Uterus (tissue), 4 donors: ENCODE measurements at regions of chr5 and their contacts with region 1.

Region 1: DNA sequence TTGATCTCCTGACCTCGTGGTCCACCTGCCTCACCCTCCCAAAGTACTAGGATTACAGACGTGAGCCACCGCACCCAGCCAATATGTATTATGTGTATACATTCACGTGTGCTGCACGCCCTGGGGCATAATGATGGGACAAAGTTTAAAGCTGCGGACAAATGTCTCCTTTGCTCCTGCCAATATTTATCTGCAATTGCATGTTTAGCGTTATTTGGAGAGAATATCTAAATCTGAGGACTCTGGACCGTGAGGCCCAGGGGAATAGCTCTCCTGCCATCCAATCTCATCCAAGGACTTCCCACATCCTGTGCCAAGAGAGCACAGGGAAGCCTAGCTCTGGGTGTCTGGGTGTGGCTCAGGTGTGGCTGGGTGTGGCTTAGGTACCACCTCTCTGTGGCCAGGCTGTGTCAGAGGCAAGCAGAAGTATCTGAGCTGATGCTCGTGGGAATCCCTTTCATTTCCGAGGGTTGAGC is 6.9 kb upstream of the BOD1 start:
- DNase-seq: no peak
- H3K4me3 ChIP-seq: no peak overlapping the region
- H3K27ac ChIP-seq: no peak overlapping the region
- H3K4me1 ChIP-seq: no peaks in the 10 kb centered on the region
- H3K27me3 ChIP-seq: no peaks in the 10 kb centered on the region
- CTCF ChIP-seq: no peak
- POLR2A ChIP-seq: no peak

Region 2: GRCh38 chr5:172586125-172587060 is 1036.9 kb before region 1 on chr5:
- intact Hi-C with region 1: no loop called
- DNase-seq: no peak
- H3K4me3 ChIP-seq: no peak overlapping the region
- H3K27ac ChIP-seq: peak overlapping the region; percentile 54 to 85
- H3K4me1 ChIP-seq: peaks cover 4 to 18% of the 10 kb centered on the region in 2 donors
- H3K27me3 ChIP-seq: no peaks in the 10 kb centered on the region
- CTCF ChIP-seq: no peak
- POLR2A ChIP-seq: no peak

Region 3: GRCh38 chr5:173736923-173737412 is 113.6 kb after region 1 on chr5:
- intact Hi-C with region 1: no loop called
- DNase-seq: no peak
- H3K4me3 ChIP-seq: no peak overlapping the region
- H3K27ac ChIP-seq: no peak overlapping the region
- H3K4me1 ChIP-seq: no peaks in the 10 kb centered on the region
- H3K27me3 ChIP-seq: no peaks in the 10 kb centered on the region
- CTCF ChIP-seq: no peak
- POLR2A ChIP-seq: no peak

Region 4: DNA sequence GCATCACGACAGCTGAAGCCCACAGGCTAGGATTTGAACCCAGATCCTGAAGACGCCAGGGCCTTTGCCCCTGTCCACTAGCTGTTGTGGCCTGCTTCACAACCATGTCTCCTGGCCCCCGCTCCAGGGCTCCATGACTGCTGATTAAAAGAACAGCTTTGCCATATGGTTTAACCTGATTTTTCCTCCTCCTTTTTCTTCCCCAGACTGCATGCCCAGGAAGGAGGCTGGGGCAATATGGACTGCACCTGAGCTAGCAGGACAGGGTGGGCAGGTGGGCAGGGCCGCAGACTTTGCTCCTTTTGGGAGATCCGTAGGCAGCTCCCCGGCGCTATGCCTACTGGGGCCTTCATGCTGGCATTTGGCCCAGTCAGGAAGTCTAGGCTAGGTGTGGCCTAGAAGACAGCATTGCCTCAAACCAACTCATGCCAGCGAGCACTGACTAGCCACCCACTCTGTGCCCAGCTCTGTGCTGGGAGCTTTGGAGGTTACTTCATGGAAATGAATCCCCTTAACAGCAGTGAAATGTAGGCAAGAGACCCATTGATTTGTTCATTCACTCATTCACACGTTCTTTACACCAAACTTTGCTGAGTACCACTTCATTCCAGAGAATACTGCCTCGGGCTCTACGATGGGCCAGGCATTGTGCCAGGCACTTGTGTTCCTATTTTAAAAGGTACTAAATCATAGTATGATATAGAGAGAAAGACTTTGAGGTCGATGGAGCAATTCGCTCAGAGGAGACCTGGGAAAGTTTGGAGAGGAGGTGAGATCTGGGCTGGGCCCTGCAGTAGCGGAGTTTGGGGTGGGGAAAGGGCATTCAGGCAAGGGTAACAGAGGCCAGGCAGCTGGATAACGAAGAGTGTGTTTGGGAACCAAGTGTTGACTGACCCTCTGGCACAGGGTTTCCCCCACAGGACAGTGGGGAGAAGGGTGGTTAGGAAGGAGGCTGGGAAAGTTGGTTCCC is 170.7 kb after region 1 on chr5:
- intact Hi-C with region 1: no loop called
- DNase-seq: no peak
- H3K4me3 ChIP-seq: no peak overlapping the region
- H3K27ac ChIP-seq: no peak overlapping the region
- H3K4me1 ChIP-seq: no peaks in the 10 kb centered on the region
- H3K27me3 ChIP-seq: no peaks in the 10 kb centered on the region
- CTCF ChIP-seq: no peak
- POLR2A ChIP-seq: no peak

Region 5: DNA sequence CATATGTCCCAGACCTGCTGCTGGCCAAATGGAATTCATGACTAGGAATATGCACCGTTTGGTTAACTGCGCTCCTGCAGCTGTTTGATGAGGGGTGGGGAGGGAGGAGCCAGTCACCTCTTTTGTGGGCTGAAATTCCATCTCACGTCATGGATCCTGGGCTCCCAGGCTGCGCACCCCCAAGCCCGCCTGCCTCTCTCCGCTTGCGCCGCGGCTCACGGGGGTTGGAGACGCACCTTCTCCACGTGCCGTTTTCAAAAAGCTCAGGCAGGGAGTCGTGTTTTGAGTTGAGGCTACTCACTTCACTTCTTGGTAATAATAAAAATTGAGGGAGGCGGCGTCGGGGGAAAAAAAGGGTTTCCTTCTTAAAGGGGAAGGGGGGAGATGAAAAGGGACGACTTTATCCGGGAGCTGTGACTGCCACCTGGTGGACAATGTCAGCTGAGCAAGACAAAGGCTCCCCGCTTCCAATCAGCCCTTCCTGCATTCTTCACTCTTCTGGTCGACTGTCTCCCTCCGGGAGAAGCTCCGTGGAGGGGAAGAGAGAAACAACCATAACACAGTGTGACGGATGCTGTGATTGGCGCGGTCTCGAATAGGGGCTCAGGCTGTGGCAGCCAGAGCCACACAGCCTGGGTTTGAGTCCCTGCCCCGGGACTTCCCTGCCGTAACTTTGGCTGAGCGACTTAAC is 349.7 kb after region 1 on chr5:
- intact Hi-C with region 1: loop called (anchors 5 kb)
- DNase-seq: peak; percentile 86
- H3K4me3 ChIP-seq: peak overlapping the region; percentile 35 to 39
- H3K27ac ChIP-seq: peak overlapping the region; percentile 39 to 61
- H3K4me1 ChIP-seq: no peaks in the 10 kb centered on the region
- H3K27me3 ChIP-seq: no peaks in the 10 kb centered on the region
- CTCF ChIP-seq: peak; percentile 86 to 91 (median 88)
- POLR2A ChIP-seq: no peak

Region 6: GRCh38 chr5:174097518-174098185 is 474.3 kb after region 1 on chr5:
- intact Hi-C with region 1: no loop called
- DNase-seq: no peak
- H3K4me3 ChIP-seq: no peak overlapping the region
- H3K27ac ChIP-seq: no peak overlapping the region
- H3K4me1 ChIP-seq: no peaks in the 10 kb centered on the region
- H3K27me3 ChIP-seq: no peaks in the 10 kb centered on the region
- CTCF ChIP-seq: no peak
- POLR2A ChIP-seq: no peak